ENCODE measurements at regions of chr7 and their contacts with region 1.

Region 1: GRCh38 chr7:107725151-107725740 is 18.7 kb upstream of the CBLL1 start:
- DNase-seq: peak; percentile 72
- H3K4me3 ChIP-seq: no peak overlapping the region
- H3K27ac ChIP-seq: no peak overlapping the region
- H3K4me1 ChIP-seq: peaks cover 6% of the 10 kb centered on the region
- CTCF ChIP-seq: peak; percentile 89

Region 2: DNA sequence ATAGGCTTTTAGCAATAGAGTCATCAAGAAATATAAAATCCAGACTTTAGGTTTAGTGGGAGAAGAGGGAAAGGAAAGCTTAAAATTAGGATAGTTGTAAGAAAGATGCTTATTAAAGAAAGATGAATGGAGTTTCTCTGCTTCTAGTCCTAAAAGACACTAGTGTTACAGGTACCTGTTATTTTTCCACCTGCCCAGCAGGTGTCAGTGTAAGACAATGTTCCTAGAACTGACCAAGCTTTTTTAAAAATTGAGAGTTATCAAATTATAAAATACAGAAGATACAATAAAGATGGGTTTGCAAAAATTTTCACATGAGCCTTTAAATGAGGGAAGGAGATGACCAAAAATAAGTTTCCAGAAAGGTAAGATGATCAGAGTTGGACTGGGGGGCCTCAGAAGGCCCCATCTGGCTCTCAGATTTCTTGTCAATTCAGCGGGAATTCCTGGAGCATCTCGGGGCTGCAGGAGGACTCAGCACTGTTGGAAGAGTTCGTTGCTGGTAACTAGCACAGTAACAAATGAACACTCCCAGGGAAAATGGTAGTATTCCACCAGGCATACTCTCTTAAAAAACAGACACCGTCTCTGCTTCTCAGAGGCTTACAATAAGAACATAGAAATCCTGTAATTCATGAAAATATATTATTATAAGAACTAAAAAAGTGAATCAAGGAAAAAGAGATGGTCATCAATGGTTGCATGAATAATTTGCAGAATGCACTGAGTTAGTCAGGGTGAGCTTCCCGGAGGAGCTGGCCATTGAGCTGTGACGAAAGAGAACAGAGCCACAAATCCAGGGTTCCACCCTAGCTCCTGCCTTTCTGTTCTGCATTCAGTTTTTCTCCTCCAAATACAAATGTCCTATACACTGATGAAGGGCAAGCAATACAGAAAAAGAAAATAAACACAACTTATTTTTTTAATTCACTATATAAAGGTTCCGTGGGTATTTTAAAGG is 932.0 kb before region 1 on chr7:
- CTCF ChIA-PET with region 1: no interaction called
- POLR2A ChIA-PET with region 1: no interaction called
- intact Hi-C with region 1: loop called (anchors 5 kb)
- DNase-seq: peak; percentile 70
- H3K4me3 ChIP-seq: no peak overlapping the region
- H3K27ac ChIP-seq: no peak overlapping the region
- H3K4me1 ChIP-seq: no peaks in the 10 kb centered on the region
- CTCF ChIP-seq: peak; percentile 96

Region 3: GRCh38 chr7:106947244-106947728 is 778.0 kb before region 1 on chr7:
- CTCF ChIA-PET with region 1: no interaction called
- POLR2A ChIA-PET with region 1: no interaction called
- intact Hi-C with region 1: loop called (anchors 5 kb)
- DNase-seq: peak; percentile 92
- H3K4me3 ChIP-seq: no peak overlapping the region
- H3K27ac ChIP-seq: no peak overlapping the region
- H3K4me1 ChIP-seq: peaks cover 18% of the 10 kb centered on the region
- CTCF ChIP-seq: peak; percentile 99

Region 4: DNA sequence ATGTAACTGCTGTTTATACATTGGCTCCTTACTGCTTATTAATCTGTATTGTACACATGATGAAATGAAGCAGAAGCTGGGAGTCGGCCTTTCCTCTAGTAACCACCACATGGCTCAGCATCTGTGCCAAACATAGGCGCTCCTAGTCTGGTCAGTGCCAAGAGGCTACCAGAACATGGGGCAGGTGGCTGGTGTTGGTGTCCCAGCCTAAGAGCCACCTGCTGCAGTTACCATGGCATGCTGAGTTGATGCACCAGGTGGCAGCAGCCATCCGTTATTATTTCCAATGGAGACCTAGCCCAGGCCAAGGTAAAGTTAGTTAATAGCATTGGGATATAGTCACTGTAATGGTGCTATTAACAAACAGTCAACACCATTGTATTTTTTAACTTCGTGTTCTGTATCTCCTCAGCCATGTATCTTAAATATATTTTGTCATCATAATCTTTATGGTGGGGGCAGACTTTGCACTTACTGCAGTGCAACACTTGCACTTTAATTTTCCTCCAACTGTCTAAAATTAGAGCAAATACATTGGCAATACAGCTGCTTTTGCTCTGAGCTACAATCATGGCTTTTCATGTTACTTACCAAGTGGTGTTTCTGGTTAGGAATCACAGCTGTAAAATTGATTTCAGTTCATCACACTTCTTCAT is 523.3 kb before region 1 on chr7:
- CTCF ChIA-PET with region 1: no interaction called
- POLR2A ChIA-PET with region 1: interaction called, 3 read pairs
- intact Hi-C with region 1: loop called (anchors 1 kb)
- DNase-seq: peak; percentile 61
- H3K4me3 ChIP-seq: no peak overlapping the region
- H3K27ac ChIP-seq: no peak overlapping the region
- H3K4me1 ChIP-seq: no peaks in the 10 kb centered on the region
- CTCF ChIP-seq: peak; percentile 84

Region 5: DNA sequence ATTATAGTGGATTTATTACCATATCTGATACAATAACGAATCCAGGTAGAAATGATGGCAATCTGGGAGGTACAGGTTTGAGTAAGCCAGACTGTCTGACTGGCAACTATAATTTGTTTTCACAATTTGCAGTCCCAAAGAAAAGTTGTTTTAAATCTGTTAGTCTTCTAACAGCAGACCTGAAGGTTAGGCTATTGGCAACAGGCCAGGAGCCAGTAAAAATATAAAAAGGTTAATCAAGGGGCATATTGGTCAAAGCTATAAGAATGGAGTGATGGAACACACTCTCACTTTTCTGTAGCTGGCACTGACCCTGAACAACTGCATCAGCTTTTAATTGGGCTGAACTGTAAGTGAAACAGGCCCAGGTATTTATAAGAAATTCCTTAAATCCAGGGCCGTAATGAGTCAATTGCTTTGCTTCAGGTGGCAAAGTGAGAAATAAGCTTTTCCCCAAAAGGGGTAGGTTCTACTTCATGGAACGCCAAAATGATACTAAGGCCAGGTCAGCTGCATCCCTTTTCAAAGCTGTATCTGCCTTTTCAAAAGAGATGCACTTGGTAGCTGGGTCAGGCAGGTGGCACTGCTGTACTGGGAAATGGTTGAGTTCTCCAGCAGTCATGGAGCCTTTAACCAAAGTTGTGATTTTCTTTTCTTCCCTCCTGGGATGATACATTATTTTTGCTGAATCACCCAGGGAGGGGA is 262.4 kb before region 1 on chr7:
- CTCF ChIA-PET with region 1: no interaction called
- POLR2A ChIA-PET with region 1: no interaction called
- intact Hi-C with region 1: loop called (anchors 1 kb)
- DNase-seq: peak; percentile 52
- H3K4me3 ChIP-seq: no peak overlapping the region
- H3K27ac ChIP-seq: no peak overlapping the region
- H3K4me1 ChIP-seq: no peaks in the 10 kb centered on the region
- CTCF ChIP-seq: peak; percentile 82

Region 6: GRCh38 chr7:107579885-107580715 is 145.1 kb before region 1 on chr7 and contains the start of gene BCAP29:
- CTCF ChIA-PET with region 1: no interaction called
- POLR2A ChIA-PET with region 1: interaction called, 3 read pairs
- intact Hi-C with region 1: loop called (anchors 5 kb)
- DNase-seq: peak; percentile 82
- H3K4me3 ChIP-seq: peak within 1 kb of the TSS; percentile 85
- H3K27ac ChIP-seq: peak within 1 kb of the TSS; percentile 45
- H3K4me1 ChIP-seq: peaks cover 18% of the 10 kb centered on the region
- CTCF ChIP-seq: peak; percentile 39
- total RNA-seq, gene BCAP29: 18.7 and 26.5 TPM in 2 replicates

Measured in OCI-LY7 (cell line).